GM12878 (cell line): ENCODE measurements at regions of chr1 and their contacts with region 1.

Region 1: DNA sequence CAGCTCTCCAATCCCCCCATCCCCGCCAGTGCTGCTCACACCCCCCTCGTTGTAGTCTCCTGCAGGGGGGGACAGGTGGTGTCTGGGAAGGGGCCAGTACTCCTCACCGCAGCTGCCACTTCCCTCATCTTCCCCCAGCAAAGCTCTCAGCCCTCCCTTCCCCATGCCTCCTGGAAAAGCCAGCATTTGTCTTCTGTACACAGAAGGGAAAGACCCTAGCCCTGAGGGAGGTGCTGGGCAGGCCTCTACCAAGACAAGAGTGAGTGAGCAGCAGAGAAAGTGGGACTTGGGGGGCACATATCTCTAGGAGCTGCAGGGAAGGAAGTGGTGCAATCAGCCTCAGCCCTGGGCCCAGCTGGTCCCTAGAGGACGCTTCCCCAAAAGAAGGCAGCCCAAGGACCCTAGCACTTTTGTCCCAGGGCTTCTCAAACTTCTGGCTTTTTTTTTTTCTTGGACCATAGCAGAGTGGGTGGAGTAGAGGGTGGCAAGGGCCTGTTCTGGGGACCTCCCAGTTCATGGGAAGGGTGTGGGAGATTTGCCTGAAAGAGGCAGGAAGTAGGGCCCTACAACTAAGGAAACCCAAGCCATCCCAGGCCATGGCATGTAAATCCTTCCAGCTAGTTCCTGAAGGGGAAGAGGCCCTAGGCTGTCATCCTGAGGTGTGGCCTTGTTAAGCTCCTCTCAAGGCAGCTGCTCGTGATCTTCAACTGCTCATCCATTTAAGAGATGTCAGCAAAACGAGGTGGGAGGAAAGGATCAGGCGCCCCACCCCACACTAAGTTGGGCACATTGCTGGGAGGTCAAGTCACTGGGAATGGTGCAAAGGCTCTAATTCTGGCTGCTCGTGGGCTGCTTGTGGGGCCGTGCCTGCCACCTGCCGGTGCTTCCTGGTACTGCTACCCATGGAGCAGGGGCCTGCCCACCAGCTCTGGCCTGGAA is 12.6 kb downstream of the ZC3H12A start:
- DNase-seq: no peak
- ATAC-seq: peak; percentile 88
- H3K4me3 ChIP-seq: no peak overlapping the region
- H3K27ac ChIP-seq: 0 out of 2 replicates have a peak overlapping the region, but pooled peaks have one; percentile 15
- H3K4me1 ChIP-seq: peaks cover 9% of the 10 kb centered on the region
- H3K27me3 ChIP-seq: no peaks in the 10 kb centered on the region
- CTCF ChIP-seq: peak; percentile 94 to 99 (median 99)
- EP300 ChIP-seq: no peak
- POLR2A ChIP-seq: peak; percentile 21
- RAD21 ChIP-seq: peak; percentile 77

Region 2: GRCh38 chr1:37458528-37458927 is 28.4 kb before region 1 on chr1:
- CTCF ChIA-PET with region 1: interaction called, 289 read pairs
- POLR2A ChIA-PET with region 1: interaction called, 8 read pairs
- RAD21 ChIA-PET with region 1: interaction called, 166 read pairs
- SMC1A ChIA-PET with region 1: interaction called, 128 read pairs
- in situ Hi-C with region 1: loop called (anchors 5 kb)
- intact Hi-C with region 1: loop called (anchors 1 kb)
- DNase-seq: no peak
- ATAC-seq: peak; percentile 33; the same call in 1 of the 3 replicates
- H3K4me3 ChIP-seq: no peak overlapping the region
- H3K27ac ChIP-seq: no peak overlapping the region
- H3K4me1 ChIP-seq: no peaks in the 10 kb centered on the region
- H3K27me3 ChIP-seq: no peaks in the 10 kb centered on the region
- CTCF ChIP-seq: peak in 2 of 3 experiments; percentile 14 to 39; a peak in 3 of 6 replicates
- EP300 ChIP-seq: no peak
- POLR2A ChIP-seq: no peak
- RAD21 ChIP-seq: 0 out of 2 replicates have a peak, but pooled peaks have one; percentile 25

Region 3: DNA sequence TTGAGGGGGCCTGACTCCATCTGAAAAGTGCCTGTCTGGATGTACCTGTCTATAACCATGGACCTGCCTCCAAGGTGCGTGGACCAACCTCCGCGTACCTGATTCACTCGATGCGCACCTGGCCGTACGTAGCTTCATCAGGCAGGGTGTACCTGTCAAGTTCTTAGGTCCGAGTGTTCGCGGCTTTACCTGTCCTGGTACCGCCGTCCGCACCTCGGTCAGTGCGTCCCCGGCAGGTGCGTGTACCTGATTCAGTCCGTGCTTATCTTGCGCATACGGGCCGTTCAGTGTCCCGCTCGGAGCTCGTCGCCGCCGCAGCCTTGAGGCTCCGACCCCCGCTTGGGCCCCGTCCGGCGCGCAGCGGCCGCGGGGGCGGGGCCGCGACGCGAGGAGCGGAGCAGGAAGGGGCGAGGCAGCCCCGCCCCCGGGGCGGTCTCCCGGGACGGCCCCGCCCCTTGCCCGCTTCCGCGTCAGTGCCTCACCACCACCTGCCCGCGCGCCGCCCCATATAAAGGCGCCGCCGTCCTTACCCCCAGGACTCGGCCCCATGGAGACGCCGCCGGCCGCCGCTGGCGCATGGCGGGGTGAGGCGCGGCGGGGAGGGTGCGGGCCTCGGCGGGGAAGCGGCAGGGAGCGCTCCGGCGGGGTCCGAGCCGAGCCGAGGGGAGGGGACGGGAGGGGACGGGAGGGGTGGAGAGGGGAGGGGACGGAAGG is 12.7 kb before region 1 on chr1 and contains the start of gene ZC3H12A:
- CTCF ChIA-PET with region 1: interaction called, 127 read pairs
- POLR2A ChIA-PET with region 1: interaction called, 35 read pairs
- RAD21 ChIA-PET with region 1: interaction called, 82 read pairs
- SMC1A ChIA-PET with region 1: interaction called, 36 read pairs
- in situ Hi-C with region 1: no loop called
- intact Hi-C with region 1: no loop called
- DNase-seq: peak; percentile 57
- ATAC-seq: peak; percentile 65
- H3K4me3 ChIP-seq: peak within 1 kb of the TSS; percentile 99
- H3K27ac ChIP-seq: peak within 1 kb of the TSS; percentile 99
- H3K4me1 ChIP-seq: peaks cover 20% of the 10 kb centered on the region
- H3K27me3 ChIP-seq: no peaks in the 10 kb centered on the region
- CTCF ChIP-seq: no peak
- EP300 ChIP-seq: no peak
- POLR2A ChIP-seq: peak; percentile 99
- RAD21 ChIP-seq: no peak
- polyA plus RNA-seq, gene ZC3H12A: 0.35 to 0.88 TPM

Region 4: DNA sequence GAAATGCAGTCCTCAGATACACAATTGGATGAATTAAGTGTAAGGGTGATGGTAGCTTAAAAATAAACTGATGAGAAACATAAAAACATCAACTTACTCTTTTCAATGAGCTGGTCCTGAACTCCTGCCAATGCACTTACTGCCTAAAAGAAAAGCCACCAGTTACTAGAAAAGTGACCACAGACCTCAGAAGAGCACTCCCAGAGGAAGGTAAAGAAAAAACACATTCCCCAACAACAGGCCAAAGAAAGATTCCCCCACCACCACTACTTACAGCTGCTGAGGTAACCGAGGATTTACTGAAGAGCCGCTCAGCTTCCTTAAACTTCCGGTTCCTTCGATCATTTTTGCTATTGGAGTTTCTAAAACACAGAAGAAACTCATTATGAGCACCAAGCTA is 22.2 kb after region 1 on chr1:
- CTCF ChIA-PET with region 1: interaction called, 26 read pairs
- POLR2A ChIA-PET with region 1: no interaction called
- RAD21 ChIA-PET with region 1: interaction called, 8 read pairs
- SMC1A ChIA-PET with region 1: interaction called, 6 read pairs
- in situ Hi-C with region 1: no loop called
- intact Hi-C with region 1: no loop called
- DNase-seq: no peak
- ATAC-seq: peak; percentile 50
- H3K4me3 ChIP-seq: no peak overlapping the region
- H3K27ac ChIP-seq: no peak overlapping the region
- H3K4me1 ChIP-seq: peaks cover 22% of the 10 kb centered on the region
- H3K27me3 ChIP-seq: no peaks in the 10 kb centered on the region
- CTCF ChIP-seq: peak; percentile 31 to 36 (median 34); a peak in 5 of 6 replicates
- EP300 ChIP-seq: no peak
- POLR2A ChIP-seq: no peak
- RAD21 ChIP-seq: no peak

Region 5: GRCh38 chr1:37562984-37563383 is 76.0 kb after region 1 on chr1:
- CTCF ChIA-PET with region 1: no interaction called
- POLR2A ChIA-PET with region 1: no interaction called
- RAD21 ChIA-PET with region 1: no interaction called
- SMC1A ChIA-PET with region 1: no interaction called
- in situ Hi-C with region 1: no loop called
- intact Hi-C with region 1: no loop called
- DNase-seq: no peak
- ATAC-seq: no peak
- H3K4me3 ChIP-seq: no peak overlapping the region
- H3K27ac ChIP-seq: no peak overlapping the region
- H3K4me1 ChIP-seq: no peaks in the 10 kb centered on the region
- H3K27me3 ChIP-seq: no peaks in the 10 kb centered on the region
- CTCF ChIP-seq: no peak
- EP300 ChIP-seq: no peak
- POLR2A ChIP-seq: no peak
- RAD21 ChIP-seq: no peak

Region 6: DNA sequence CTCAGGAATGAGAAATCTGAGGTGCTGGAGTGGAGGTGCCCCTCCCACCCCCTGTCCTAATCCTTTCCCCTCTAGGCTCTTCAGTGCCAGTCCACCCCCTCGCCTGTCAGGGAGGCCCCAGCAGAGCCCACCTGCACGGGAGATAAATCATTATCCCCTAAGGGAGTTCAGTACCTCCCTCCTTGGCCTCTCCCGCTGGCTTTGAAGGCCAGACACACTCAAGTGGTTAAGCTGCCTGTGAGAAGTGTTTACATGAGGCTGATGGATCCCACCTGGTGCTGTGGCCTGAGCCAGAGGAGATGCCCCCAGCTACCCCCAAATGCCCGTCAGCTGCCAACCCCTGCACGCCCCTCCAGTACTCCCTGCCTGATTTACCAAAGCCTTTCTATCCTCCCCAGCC is 144.1 kb after region 1 on chr1:
- CTCF ChIA-PET with region 1: no interaction called
- POLR2A ChIA-PET with region 1: no interaction called
- RAD21 ChIA-PET with region 1: no interaction called
- SMC1A ChIA-PET with region 1: no interaction called
- in situ Hi-C with region 1: no loop called
- intact Hi-C with region 1: no loop called
- DNase-seq: no peak
- ATAC-seq: no peak
- H3K4me3 ChIP-seq: no peak overlapping the region
- H3K27ac ChIP-seq: no peak overlapping the region
- H3K4me1 ChIP-seq: no peaks in the 10 kb centered on the region
- H3K27me3 ChIP-seq: peaks cover 23 to 34% of the 10 kb centered on the region in 2 experiments
- CTCF ChIP-seq: no peak
- EP300 ChIP-seq: no peak
- POLR2A ChIP-seq: no peak
- RAD21 ChIP-seq: no peak